A549 (cell line): ENCODE measurements at regions of chr10 and their contacts with region 1.

Region 1: GRCh38 chr10:91017198-91017597 is 96.3 kb upstream of the ANKRD1 start:
- DNase-seq: no peak
- ATAC-seq: no peak
- H3K4me3 ChIP-seq: no peak overlapping the region
- H3K27ac ChIP-seq: no peak overlapping the region
- H3K4me1 ChIP-seq: no peaks in the 10 kb centered on the region
- CTCF ChIP-seq: no peak
- EP300 ChIP-seq: no peak
- POLR2A ChIP-seq: no peak
- RAD21 ChIP-seq: no peak

Region 2: GRCh38 chr10:91006001-91006751 is 11.0 kb before region 1 on chr10:
- CTCF ChIA-PET with region 1: interaction called, 13 read pairs
- POLR2A ChIA-PET with region 1: no interaction called
- DNase-seq: peak; percentile 33 to 76
- ATAC-seq: peak; percentile 74 to 84; a peak in 5 of 6 replicates
- H3K4me3 ChIP-seq: no peak overlapping the region
- H3K27ac ChIP-seq: peak overlapping the region in 1 of 2 experiments; percentile 8; a peak in 1 of 6 replicates
- H3K4me1 ChIP-seq: peaks cover 11% of the 10 kb centered on the region
- CTCF ChIP-seq: peak; percentile 82
- EP300 ChIP-seq: no peak
- POLR2A ChIP-seq: no peak
- RAD21 ChIP-seq: peak; percentile 81 to 87

Region 3: DNA sequence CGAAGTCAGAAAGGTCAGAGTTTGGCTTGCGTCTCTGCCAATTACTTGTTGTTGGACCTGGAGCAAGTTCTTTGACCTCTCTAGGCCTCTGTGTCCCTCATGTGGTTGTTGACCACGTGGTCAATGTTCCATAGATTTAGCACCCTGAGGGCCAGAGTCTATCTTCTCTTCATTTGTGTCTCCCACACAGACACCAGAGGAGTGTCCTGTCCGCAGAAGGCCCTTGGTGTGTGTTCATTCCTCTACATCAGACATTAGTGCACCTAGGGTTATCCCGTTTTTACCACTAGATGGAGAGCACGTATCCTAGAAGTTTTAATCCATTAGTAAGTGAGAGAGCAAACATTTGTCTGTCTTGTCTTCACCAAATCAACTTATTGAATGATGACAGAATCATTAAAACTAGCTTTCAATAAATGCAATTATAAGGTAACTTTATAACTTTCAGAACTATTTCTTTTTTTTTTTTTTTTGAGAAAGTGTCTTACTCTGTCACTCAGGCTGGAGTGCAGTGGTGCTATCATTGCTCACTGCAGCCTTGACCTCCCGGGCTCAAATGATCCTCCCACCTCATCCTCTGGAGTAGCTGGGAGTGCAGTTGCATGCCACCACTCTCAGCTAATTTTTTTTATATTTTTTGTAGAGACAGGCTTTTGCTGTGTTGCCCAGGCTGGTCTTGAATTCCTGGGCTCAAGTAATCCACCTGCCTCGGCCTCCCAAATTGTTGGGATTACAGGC is 26.1 kb after region 1 on chr10:
- CTCF ChIA-PET with region 1: no interaction called
- POLR2A ChIA-PET with region 1: no interaction called
- DNase-seq: peak; percentile 25 to 53
- ATAC-seq: peak; percentile 94 to 97
- H3K4me3 ChIP-seq: no peak overlapping the region
- H3K27ac ChIP-seq: no peak overlapping the region; a peak in 1 of 6 replicates
- H3K4me1 ChIP-seq: no peaks in the 10 kb centered on the region
- CTCF ChIP-seq: peak; percentile 66
- EP300 ChIP-seq: no peak
- POLR2A ChIP-seq: no peak
- RAD21 ChIP-seq: peak; percentile 67 to 77